Sciatic nerve (tissue), 2 donors: ENCODE measurements at regions of chr1 and their contacts with region 1.

Region 1: DNA sequence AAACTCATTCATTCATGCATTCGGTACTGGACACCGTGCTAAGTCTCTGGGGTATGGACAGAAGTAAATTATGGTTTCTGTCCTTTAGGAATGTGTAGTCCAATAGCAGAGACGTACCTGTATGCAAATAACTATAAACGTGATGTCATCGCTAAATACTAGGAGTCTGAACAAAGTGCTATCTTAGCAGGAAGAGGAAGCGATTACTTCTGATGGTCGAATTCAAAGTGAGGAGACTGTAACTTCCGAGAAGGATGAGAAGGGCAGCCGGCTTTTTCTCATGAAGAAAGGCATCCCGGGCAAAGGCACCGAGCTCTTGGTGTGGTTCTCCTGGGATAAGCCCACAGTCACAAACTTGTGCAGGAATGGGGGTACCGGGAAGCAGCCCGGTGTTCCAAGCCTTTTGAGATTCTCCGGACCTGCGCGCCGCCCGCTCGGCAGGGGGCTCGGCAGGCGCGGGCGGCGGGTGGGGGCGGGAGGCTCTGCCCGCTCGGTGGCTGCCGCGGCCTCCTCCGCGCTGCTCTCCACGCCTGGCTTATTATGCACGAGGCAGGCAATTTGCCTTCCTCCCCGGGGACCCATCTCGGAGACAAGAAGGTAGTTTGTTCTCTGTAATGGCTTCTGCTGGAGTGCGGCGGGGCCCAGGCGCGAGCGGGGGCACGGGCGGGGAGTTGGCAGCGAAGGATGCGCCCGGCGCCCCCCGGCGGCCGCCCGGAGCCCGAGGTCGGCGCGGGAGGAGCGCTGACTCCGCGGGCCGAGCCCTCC is 67.5 kb upstream of the CD1D start:
- DNase-seq: peak; percentile 70
- ATAC-seq: peak; percentile 74

Region 2: DNA sequence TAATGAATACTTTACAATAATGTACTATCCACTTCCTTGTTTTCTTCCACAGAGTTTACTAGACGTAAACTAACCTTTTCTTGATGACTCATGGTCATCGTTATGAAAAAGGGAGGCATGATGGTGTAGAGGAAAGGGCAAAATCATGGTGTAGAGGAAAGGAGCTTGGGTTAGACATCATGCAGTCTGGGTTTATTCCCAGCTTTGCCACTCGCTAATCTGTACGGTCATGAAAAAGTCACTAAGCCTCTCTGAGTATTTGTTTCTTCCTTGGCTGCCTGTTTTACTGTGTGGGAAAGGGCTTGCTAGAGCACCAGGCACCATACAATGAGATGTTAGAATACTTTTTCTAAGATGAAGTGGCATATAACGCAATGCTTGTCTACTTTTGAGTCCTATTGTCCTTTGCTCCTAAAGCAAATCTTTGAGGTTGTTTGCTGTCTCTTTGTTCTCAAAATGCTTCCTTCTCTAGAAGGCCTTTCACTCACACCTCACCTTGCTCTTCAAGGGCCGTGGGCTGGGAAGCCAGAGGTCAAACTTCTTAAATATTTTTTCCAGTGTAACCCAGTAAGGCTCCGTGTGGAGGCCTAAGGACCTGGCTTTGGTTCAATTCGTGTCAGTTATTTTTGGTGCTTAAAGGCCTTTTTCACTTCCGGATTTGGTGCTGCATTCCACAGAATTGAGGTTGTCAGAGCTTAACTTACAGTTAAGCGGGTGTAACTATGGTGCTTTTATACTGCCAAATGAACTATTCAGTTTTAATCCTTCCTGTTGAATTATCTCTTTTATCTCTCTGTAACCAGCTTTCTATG is 965.1 kb before region 1 on chr1:
- intact Hi-C with region 1: no loop called
- DNase-seq: no peak
- ATAC-seq: no peak

Region 3: DNA sequence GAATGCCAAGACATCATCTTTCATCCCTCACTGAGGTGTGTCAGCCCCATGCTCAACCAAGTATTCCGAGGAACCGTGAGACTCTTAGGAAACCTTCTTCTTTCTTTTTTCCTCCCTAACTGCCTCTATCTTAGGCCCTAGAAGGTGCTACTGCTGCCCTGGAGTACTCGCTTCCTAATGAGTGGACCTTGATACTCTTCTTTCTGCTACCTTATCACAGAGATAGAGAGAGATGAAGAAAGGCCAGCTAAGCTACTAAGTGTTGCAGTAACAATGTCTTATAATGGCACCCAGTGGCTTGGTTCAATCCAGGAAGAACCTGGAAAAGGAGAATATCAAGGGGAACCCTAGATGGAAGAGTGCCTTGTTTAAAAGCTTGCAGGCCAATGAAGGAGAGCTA is 33.1 kb before region 1 on chr1:
- intact Hi-C with region 1: loop called (anchors 2 kb)
- DNase-seq: no peak
- ATAC-seq: no peak